ENCODE measurements at regions of chr10 and their contacts with region 1.

Region 1: DNA sequence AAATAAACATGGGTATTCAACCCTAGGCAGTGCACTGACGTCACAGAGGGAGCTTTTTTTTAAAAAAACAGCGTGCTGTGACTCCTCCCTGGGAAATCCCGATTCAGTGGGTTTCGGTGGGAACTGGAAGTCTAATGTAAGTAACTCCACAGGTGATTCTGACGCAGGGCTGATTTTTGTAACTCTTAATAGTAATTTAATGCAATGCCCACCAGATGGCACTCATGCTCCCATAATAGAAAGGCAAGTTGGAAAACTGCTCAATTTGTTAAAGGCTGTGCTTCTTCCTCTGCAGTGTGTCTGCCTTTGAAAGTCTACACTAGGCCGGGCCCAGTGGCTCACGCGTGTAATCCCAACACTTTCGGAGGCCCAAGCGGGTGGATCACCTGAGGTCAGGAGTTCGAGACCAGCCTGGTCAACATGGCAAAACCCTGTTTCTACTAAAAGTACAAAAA is 10.9 kb upstream of the RSU1 start:
- DNase-seq: peak; percentile 66
- ATAC-seq: peak; percentile 95
- H3K4me3 Mint-ChIP-seq: no peak overlapping the region
- H3K27ac Mint-ChIP-seq: no peak overlapping the region
- H3K4me1 Mint-ChIP-seq: no peaks in the 10 kb centered on the region
- H3K27me3 Mint-ChIP-seq: no peaks in the 10 kb centered on the region
- CTCF ChIP-seq: peak; percentile 77

Region 2: GRCh38 chr10:16809074-16809718 is 18.9 kb before region 1 on chr10:
- CTCF ChIA-PET with region 1: interaction called, 11 read pairs
- POLR2A ChIA-PET with region 1: no interaction called
- intact Hi-C with region 1: no loop called
- DNase-seq: peak; percentile 83
- ATAC-seq: peak; percentile 89
- H3K4me3 Mint-ChIP-seq: no peak overlapping the region
- H3K27ac Mint-ChIP-seq: no peak overlapping the region
- H3K4me1 Mint-ChIP-seq: peaks cover 20% of the 10 kb centered on the region
- H3K27me3 Mint-ChIP-seq: no peaks in the 10 kb centered on the region
- CTCF ChIP-seq: peak; percentile 65

Region 3: GRCh38 chr10:16843252-16843870 is 15.2 kb after region 1 on chr10:
- CTCF ChIA-PET with region 1: interaction called, 27 read pairs
- POLR2A ChIA-PET with region 1: no interaction called
- intact Hi-C with region 1: no loop called
- DNase-seq: no peak
- ATAC-seq: peak; percentile 49
- H3K4me3 Mint-ChIP-seq: no peak overlapping the region
- H3K27ac Mint-ChIP-seq: no peak overlapping the region
- H3K4me1 Mint-ChIP-seq: no peaks in the 10 kb centered on the region
- H3K27me3 Mint-ChIP-seq: no peaks in the 10 kb centered on the region
- CTCF ChIP-seq: peak; percentile 78

Measured in activated CD8-positive, alpha-beta T cell treated with anti-CD3 and anti-CD28 coated beads for 36 hours (primary cell).